Natural killer cell (primary cell): ENCODE measurements at regions of chr7 and their contacts with region 1.

Region 1: GRCh38 chr7:50092579-50093491 is at the start of gene ZPBP:
- DNase-seq: peak; percentile 43 to 84
- ATAC-seq: peak; percentile 75 to 88 (median 82)
- H3K4me3 ChIP-seq: peak within 1 kb of the TSS; percentile 46
- H3K4me3 Mint-ChIP-seq: peak within 1 kb of the TSS; percentile 94
- H3K27ac ChIP-seq: peak within 1 kb of the TSS; percentile 39
- H3K27ac Mint-ChIP-seq: peak within 1 kb of the TSS; percentile 70 to 94
- H3K4me1 ChIP-seq: peaks cover 4% of the 10 kb centered on the region
- H3K4me1 Mint-ChIP-seq: peaks cover 6 to 7% of the 10 kb centered on the region in 2 donors
- H3K27me3 ChIP-seq: no peaks in the 10 kb centered on the region
- H3K27me3 Mint-ChIP-seq: peaks cover 10 to 18% of the 10 kb centered on the region in 2 donors
- CTCF ChIP-seq: peak; percentile 96
- total RNA-seq, gene ZPBP: not detected

Region 2: DNA sequence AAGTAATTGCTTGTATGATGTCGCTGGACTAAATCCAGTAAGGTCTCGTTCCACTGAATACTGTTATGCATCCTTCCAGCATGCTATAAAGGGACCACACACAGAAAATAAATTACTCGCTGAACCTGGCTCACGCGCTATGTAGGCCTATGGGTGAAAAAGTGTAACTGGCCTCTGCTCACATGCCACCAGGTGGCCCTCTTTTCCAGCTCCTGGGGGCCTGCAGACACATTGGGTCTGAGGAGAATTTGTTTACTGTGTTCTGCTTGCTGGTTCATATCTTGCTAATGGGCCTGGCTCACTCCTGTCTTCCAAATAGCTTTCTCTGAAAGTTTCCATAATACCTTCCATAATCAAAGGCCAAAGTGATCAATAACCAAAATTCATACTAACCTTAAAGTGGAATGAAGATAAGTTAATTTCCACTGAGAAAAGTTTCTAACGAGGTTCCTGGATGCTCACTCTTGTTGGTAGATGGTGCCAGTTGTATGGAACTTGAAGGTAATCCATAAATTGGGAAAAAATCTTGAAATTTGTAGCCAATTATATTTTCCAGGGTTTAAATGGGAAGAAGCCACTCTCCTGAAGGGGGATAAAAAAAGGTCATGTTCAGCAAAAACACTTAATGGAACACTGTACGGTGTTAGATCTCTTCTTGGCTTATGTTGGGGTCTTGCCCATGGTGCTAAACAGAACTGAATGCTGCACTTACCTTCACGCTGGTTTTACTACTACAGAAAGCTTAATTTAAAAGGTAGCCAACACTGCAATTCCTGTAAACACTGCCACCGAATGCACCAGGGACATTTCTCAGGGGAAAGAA is 27.2 kb after region 1 on chr7:
- intact Hi-C with region 1: no loop called
- DNase-seq: peak in 1 of 2 donors; percentile 56
- ATAC-seq: no peak
- H3K4me3 ChIP-seq: no peak overlapping the region
- H3K4me3 Mint-ChIP-seq: no peak overlapping the region
- H3K27ac ChIP-seq: no peak overlapping the region
- H3K27ac Mint-ChIP-seq: no peak overlapping the region
- H3K4me1 ChIP-seq: no peaks in the 10 kb centered on the region
- H3K4me1 Mint-ChIP-seq: no peaks in the 10 kb centered on the region
- H3K27me3 ChIP-seq: no peaks in the 10 kb centered on the region
- H3K27me3 Mint-ChIP-seq: peaks cover 5 to 40% of the 10 kb centered on the region in 2 donors
- CTCF ChIP-seq: no peak

Region 3: GRCh38 chr7:50369143-50370026 is 276.6 kb after region 1 on chr7:
- intact Hi-C with region 1: loop called (anchors 1 kb)
- DNase-seq: peak in 1 of 2 donors; percentile 92
- ATAC-seq: peak; percentile 81
- H3K4me3 ChIP-seq: no peak overlapping the region
- H3K4me3 Mint-ChIP-seq: peak overlapping the region; percentile 10
- H3K27ac ChIP-seq: peak overlapping the region; percentile 31
- H3K27ac Mint-ChIP-seq: no peak overlapping the region
- H3K4me1 ChIP-seq: peaks cover 43% of the 10 kb centered on the region
- H3K4me1 Mint-ChIP-seq: peaks cover 81 to 86% of the 10 kb centered on the region in 2 donors
- H3K27me3 ChIP-seq: no peaks in the 10 kb centered on the region
- H3K27me3 Mint-ChIP-seq: no peaks in the 10 kb centered on the region
- CTCF ChIP-seq: peak; percentile 85

Region 4: DNA sequence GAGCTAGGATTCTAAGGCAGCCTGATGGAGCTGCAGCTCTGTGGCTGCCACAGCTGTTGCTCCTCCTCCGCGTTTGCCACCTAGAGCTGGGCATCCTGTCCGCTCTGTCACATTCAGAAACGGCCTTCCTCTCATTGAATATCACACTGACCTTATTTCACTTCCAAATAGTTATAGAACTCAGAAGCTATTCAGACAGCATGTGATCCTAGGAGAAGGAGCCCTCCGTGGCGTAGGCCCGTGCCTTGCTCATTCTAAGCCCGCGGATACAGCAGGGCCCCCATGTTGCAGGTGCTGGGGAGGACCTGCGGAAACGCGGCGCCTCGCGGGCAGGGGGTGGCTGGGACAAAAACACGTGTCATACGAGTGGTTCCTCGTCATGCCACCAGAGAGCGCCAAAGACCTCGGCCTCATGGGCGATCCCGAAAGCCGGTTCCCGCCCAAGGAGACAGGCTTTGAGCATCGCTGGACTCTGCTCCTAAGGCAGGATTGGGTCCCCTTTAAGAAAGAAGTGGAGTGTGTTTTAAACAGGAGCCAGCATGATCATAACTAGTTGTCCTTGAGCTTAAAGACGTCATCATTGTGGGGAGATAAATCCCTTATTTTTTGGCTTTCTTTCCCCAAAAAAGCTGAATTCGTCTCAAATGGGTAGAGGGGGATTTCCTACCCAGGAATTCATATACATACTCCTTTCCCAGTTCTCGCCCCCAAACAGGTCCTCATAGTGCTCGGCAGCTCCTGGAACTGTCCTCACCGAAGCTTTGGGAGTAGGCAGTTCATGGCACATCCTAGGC is 375.2 kb after region 1 on chr7:
- intact Hi-C with region 1: loop called (anchors 1 kb)
- DNase-seq: peak; percentile 66 to 89
- ATAC-seq: peak; percentile 87 to 98 (median 97)
- H3K4me3 ChIP-seq: no peak overlapping the region
- H3K4me3 Mint-ChIP-seq: no peak overlapping the region
- H3K27ac ChIP-seq: no peak overlapping the region
- H3K27ac Mint-ChIP-seq: peak overlapping the region in 1 of 2 donors; percentile 42
- H3K4me1 ChIP-seq: peaks cover 9% of the 10 kb centered on the region
- H3K4me1 Mint-ChIP-seq: peaks cover 0 to 11% of the 10 kb centered on the region in 2 donors
- H3K27me3 ChIP-seq: no peaks in the 10 kb centered on the region
- H3K27me3 Mint-ChIP-seq: peaks cover 10 to 12% of the 10 kb centered on the region in 2 donors
- CTCF ChIP-seq: peak; percentile 85

Region 5: DNA sequence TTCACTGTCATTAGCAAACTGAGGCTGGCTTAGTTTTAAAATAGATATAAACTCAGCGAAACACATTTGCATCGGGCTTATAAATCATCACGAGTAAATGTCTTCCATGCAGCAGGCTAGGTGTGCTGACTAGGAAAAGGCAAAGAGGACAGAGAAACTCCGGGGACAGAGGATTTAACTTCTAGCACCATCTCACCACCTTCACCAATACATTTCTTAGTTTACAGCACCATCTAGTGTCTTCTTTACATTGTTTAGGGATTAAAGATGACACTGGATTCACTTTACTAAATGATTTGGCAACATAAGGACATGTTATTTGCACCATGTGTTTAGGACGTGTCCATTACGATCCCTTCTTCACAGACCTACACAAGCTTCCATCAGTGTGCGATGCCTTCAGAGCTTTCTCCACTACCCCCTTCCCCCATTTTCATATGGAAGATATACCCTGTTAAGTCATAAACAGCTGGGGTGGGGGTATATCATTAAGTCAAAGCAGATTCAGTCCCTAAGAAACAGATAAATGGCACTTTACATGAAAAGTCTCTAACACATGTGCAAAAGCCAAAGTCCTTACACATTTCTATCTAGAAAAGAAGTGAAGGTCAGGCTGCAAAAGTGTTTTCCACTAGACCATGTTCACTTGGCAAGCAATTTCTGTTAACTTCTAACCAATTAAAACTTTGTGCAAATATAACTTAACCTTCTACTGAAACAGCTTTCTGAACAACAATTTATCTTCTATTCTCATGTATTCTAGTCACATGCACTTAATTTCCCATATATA is 586.6 kb after region 1 on chr7:
- intact Hi-C with region 1: loop called (anchors 1 kb)
- DNase-seq: peak in 1 of 2 donors; percentile 75
- ATAC-seq: peak; percentile 72 to 82 (median 76)
- H3K4me3 ChIP-seq: no peak overlapping the region
- H3K4me3 Mint-ChIP-seq: no peak overlapping the region
- H3K27ac ChIP-seq: no peak overlapping the region
- H3K27ac Mint-ChIP-seq: no peak overlapping the region
- H3K4me1 ChIP-seq: no peaks in the 10 kb centered on the region
- H3K4me1 Mint-ChIP-seq: no peaks in the 10 kb centered on the region
- H3K27me3 ChIP-seq: no peaks in the 10 kb centered on the region
- H3K27me3 Mint-ChIP-seq: peaks cover 7 to 40% of the 10 kb centered on the region in 2 donors
- CTCF ChIP-seq: peak; percentile 74